ENCODE measurements at regions of chr3 and their contacts with region 1.

Region 1: GRCh38 chr3:124559881-124560574 is 170.2 kb upstream of the UMPS start:
- ATAC-seq: peak; percentile 30 to 88 (median 81)
- H3K4me3 ChIP-seq: no peak overlapping the region
- H3K27ac ChIP-seq: no peak overlapping the region
- H3K4me1 ChIP-seq: peaks cover 0 to under 1% of the 10 kb centered on the region in 2 donors

Region 2: GRCh38 chr3:124107104-124107890 is 452.7 kb before region 1 on chr3:
- in situ Hi-C with region 1: no loop called
- ATAC-seq: peak in 6 of 8 experiments; percentile 22 to 75 (median 52)
- H3K4me3 ChIP-seq: no peak overlapping the region
- H3K27ac ChIP-seq: no peak overlapping the region
- H3K4me1 ChIP-seq: no peaks in the 10 kb centered on the region

Region 3: DNA sequence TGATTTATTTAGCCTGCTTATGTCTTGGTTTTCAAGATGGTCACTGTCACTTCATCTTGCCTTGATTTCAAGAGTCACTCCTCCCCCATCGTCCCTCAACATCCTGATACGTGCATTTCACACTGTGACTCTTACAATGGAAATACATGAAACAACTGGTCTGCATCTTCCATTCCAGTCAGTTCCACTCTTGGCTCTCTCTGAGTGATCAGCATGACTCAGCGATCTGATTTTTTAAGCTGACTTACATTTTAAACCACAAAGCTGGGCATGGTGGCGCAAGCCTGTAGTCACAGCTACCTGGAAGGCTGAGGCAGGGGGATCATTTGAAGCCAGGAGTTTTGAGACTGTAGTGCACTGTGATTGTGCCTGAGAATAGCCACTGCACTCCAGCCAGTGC is 296.9 kb before region 1 on chr3:
- in situ Hi-C with region 1: no loop called
- ATAC-seq: peak in 7 of 8 experiments; percentile 27 to 68 (median 61)
- H3K4me3 ChIP-seq: no peak overlapping the region
- H3K27ac ChIP-seq: no peak overlapping the region
- H3K4me1 ChIP-seq: peaks cover 6 to 21% of the 10 kb centered on the region in 2 donors

Region 4: DNA sequence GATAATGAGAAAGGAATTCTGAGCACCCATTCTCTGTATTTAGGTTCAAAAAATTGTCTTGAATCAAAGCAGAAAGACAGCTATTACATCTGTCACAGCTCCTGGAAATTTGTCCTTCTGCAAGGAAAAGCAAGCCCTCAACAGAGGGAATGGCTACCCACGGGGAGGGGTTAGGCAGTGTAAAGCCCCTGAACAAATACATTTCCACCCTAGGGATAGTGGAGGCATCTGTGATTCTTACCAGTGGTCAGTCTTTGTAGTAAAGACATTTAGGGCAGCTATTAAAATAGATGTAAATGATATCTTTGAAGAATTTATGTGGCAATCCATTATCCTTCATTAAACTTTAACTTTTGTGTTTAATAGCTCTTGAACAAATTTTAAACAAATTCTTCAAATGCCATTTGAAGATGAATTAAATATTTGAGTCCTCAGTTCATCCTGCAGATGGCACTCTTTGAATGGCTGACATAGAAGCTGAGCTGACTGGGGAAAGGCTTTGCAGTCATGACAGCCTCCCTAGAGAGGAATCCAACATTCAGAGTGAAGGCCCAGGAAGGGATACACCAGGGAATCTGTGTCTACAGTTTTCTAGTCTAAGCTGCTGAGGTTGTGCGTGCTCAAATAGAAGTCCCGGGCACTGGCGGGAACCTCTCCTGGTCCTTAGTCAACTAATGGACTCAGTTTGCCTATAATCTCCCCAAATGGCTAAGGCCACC is 208.4 kb before region 1 on chr3:
- in situ Hi-C with region 1: loop called in 1 of 9 experiments (anchors 10 kb)
- ATAC-seq: peak; percentile 85 to 100 (median 97)
- H3K4me3 ChIP-seq: no peak overlapping the region
- H3K27ac ChIP-seq: no peak overlapping the region
- H3K4me1 ChIP-seq: peaks cover 3 to 6% of the 10 kb centered on the region in 2 donors

Region 5: DNA sequence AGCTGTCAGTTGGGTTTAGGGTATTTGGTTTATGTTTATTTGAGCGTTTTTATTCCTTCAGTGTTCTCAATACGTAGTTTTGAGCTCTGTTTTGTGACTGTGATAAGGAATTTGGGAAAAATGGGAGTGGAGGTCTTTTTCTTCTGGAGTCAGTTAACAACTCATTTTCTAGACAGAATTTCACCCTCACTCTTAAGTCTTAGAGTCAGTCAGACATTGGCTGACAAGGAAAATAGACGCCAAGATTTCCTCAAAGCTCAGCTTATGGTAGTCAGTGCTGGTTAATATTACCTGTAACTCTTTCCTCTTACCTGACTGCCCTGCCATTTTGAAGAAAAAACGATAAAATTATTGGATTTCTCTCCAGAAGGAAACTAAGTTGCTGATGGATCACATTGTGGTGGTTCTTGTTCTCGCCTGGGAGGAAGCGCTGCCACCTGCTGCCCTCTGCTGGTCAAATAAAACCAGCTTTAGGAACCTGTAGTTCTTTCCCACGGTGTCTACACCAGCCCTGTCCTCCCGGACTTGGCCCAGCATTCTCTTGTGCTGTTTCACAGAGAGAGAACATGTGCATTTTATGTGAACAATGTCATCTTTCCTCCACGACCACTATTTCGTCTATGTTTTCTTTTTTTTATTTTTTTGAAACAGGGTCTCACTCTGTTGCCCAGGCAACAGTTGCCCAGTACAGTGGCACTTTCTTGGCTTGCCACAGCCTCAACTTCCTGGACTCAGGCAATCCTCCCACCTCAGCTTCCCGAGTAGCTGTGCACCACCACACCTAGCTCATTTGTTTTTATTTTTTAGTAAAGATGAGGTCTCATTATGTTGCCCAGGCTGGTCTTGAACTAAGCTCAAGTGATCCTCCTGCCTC is 128.8 kb after region 1 on chr3:
- in situ Hi-C with region 1: loop called in 3 of 9 experiments (anchors 10 to 25 kb)
- ATAC-seq: peak in 6 of 8 experiments; percentile 55 to 99 (median 91)
- H3K4me3 ChIP-seq: no peak overlapping the region
- H3K27ac ChIP-seq: no peak overlapping the region
- H3K4me1 ChIP-seq: no peaks in the 10 kb centered on the region

Region 6: DNA sequence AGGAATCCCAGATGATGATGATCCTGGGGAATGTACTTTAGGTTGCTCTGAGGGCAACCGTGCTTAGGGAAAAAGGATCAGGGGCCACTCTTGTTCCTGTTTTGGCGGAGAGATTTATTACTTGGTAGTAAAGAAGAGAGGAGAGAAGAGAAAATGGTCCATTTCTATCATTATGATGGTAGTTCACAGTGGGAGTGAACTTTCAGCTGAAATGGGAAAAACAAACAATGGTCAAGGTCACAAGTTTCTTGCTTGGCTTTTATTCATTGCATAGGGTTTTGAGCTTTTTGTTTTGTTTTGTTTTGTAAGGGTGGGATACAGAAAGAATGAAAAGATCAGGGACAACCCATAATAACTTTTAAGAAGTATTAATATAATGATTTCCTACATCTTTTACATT is 162.6 kb after region 1 on chr3:
- in situ Hi-C with region 1: no loop called
- ATAC-seq: no peak
- H3K4me3 ChIP-seq: no peak overlapping the region
- H3K27ac ChIP-seq: no peak overlapping the region
- H3K4me1 ChIP-seq: peaks cover 4 to 5% of the 10 kb centered on the region in 2 donors

Region 7: GRCh38 chr3:125051715-125052581 is 491.9 kb after region 1 on chr3:
- in situ Hi-C with region 1: no loop called
- ATAC-seq: peak in 5 of 8 experiments; percentile 0 to 7 (median 1)
- H3K4me3 ChIP-seq: peak overlapping the region in 1 of 5 donors; percentile 10
- H3K27ac ChIP-seq: no peak overlapping the region
- H3K4me1 ChIP-seq: peaks cover 26 to 41% of the 10 kb centered on the region in 2 donors